ENCODE measurements at regions of chr6 and their contacts with region 1.

Region 1: GRCh38 chr6:125314019-125314581 is 12.3 kb upstream of the HDDC2 start:
- DNase-seq: peak; percentile 54
- H3K4me3 ChIP-seq: no peak overlapping the region; a peak in 1 of 4 replicates
- H3K27ac ChIP-seq: no peak overlapping the region
- H3K4me1 ChIP-seq: peaks cover 0 to 2% of the 10 kb centered on the region in 2 experiments; a peak in 1 of 4 replicates
- H3K27me3 ChIP-seq: peaks cover 20% of the 10 kb centered on the region; the same call in 1 of the 2 replicates
- CTCF ChIP-seq: peak; percentile 84
- EP300 ChIP-seq: no peak
- RAD21 ChIP-seq: peak; percentile 92

Region 2: DNA sequence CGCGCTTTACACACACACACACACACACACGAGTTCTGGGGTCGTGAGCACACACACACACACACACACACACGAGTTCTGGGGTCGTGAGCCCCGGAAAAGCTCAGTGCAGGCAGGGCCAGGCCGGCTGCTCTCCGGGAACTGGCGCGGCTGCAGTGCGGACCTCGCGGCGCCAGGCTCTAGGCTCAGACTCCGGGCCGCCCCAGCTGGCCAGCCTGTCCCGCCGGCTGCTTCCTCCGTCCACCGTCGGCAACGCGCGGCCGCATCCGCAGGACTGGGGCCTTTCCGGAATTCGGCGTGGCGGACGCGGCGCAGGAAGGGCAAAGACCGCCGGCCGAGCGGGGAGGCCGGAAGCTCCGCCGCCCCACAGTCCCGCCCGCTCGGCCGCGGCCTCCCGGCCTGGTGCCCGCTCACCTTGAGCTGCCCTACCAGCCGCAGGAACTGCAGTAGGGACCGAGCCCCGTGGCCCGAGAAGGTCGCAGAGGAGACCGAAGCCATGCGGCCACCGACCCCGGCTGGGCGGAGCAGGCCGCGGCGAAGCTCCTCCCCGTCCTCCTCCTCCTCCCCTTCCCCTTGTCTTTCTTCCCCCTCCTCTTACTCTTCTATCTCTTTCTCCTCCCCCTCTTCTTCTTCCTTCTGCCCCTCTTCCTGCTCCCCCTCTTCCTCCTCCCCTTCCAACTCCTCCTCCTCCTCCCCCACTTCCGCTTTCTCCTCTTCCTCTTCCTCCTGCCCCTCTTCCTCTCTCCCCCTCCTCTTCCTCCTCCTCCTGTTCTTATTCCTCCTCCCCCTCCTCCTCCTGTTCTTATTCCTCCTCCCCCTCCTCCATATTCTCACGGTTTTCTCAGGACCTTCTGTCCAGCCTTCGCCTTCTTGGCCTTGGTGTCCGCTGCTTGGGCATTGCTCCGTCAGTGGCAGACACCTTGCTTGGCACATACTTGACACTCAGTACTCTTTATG is 12.4 kb before region 1 on chr6 and contains the start of gene HDDC2:
- CTCF ChIA-PET with region 1: interaction called, 25 read pairs
- POLR2A ChIA-PET with region 1: no interaction called
- DNase-seq: peak; percentile 89
- H3K4me3 ChIP-seq: peak within 1 kb of the TSS; percentile 60 to 74
- H3K27ac ChIP-seq: peak within 1 kb of the TSS; percentile 56 to 76
- H3K4me1 ChIP-seq: peaks cover 0 to 8% of the 10 kb centered on the region in 2 experiments; a peak in 3 of 4 replicates
- H3K27me3 ChIP-seq: no peaks in the 10 kb centered on the region; the same call in 1 of the 2 replicates
- CTCF ChIP-seq: no peak
- EP300 ChIP-seq: no peak; a peak in 1 of 4 replicates
- RAD21 ChIP-seq: no peak
- polyA plus RNA-seq, gene HDDC2: 80.2 and 85.5 TPM in 2 replicates

Region 3: GRCh38 chr6:125325586-125325985 is 11.5 kb after region 1 on chr6:
- CTCF ChIA-PET with region 1: interaction called, 42 read pairs
- POLR2A ChIA-PET with region 1: no interaction called
- DNase-seq: no peak
- H3K4me3 ChIP-seq: no peak overlapping the region
- H3K27ac ChIP-seq: no peak overlapping the region
- H3K4me1 ChIP-seq: no peaks in the 10 kb centered on the region
- H3K27me3 ChIP-seq: peaks cover 7% of the 10 kb centered on the region; the same call in 1 of the 2 replicates
- CTCF ChIP-seq: no peak
- EP300 ChIP-seq: no peak
- RAD21 ChIP-seq: no peak

Region 4: GRCh38 chr6:125377621-125378020 is 63.5 kb after region 1 on chr6:
- CTCF ChIA-PET with region 1: no interaction called
- POLR2A ChIA-PET with region 1: no interaction called
- DNase-seq: peak; percentile 33
- H3K4me3 ChIP-seq: no peak overlapping the region
- H3K27ac ChIP-seq: no peak overlapping the region
- H3K4me1 ChIP-seq: no peaks in the 10 kb centered on the region
- H3K27me3 ChIP-seq: peaks cover 25% of the 10 kb centered on the region; the same call in 1 of the 2 replicates
- CTCF ChIP-seq: no peak
- EP300 ChIP-seq: no peak
- RAD21 ChIP-seq: no peak

Region 5: GRCh38 chr6:125749173-125749864 is 435.2 kb after region 1 on chr6 and contains the start of gene HEY2:
- CTCF ChIA-PET with region 1: interaction called, 278 read pairs
- POLR2A ChIA-PET with region 1: no interaction called
- DNase-seq: peak; percentile 99
- H3K4me3 ChIP-seq: peak within 1 kb of the TSS; percentile 55 to 61
- H3K27ac ChIP-seq: no peak within 1 kb of the TSS
- H3K4me1 ChIP-seq: peaks cover 0 to 18% of the 10 kb centered on the region in 2 experiments; a peak in 2 of 4 replicates
- H3K27me3 ChIP-seq: peaks cover 67% of the 10 kb centered on the region
- CTCF ChIP-seq: no peak
- EP300 ChIP-seq: no peak
- RAD21 ChIP-seq: no peak
- polyA plus RNA-seq, gene HEY2: not detected in 2 replicates

Region 6: DNA sequence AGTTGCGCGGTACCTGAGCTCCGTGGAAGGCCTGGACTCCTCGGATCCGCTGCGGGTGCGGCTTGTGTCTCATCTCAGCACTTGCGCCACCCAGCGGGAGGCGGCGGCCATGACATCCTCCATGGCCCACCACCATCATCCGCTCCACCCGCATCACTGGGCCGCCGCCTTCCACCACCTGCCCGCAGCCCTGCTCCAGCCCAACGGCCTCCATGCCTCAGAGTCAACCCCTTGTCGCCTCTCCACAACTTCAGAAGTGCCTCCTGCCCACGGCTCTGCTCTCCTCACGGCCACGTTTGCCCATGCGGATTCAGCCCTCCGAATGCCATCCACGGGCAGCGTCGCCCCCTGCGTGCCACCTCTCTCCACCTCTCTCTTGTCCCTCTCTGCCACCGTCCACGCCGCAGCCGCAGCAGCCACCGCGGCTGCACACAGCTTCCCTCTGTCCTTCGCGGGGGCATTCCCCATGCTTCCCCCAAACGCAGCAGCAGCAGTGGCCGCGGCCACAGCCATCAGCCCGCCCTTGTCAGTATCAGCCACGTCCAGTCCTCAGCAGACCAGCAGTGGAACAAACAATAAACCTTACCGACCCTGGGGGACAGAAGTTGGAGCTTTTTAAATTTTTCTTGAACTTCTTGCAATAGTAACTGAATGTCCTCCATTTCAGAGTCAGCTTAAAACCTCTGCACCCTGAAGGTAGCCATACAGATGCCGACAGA is 445.2 kb after region 1 on chr6:
- CTCF ChIA-PET with region 1: interaction called, 278 read pairs
- POLR2A ChIA-PET with region 1: no interaction called
- DNase-seq: peak; percentile 87
- H3K4me3 ChIP-seq: peak overlapping the region; percentile 27 to 37
- H3K27ac ChIP-seq: no peak overlapping the region
- H3K4me1 ChIP-seq: peaks cover 0 to 8% of the 10 kb centered on the region in 2 experiments; a peak in 1 of 4 replicates
- H3K27me3 ChIP-seq: peaks cover 68% of the 10 kb centered on the region
- CTCF ChIP-seq: peak; percentile 73
- EP300 ChIP-seq: no peak
- RAD21 ChIP-seq: peak; percentile 51

Region 7: DNA sequence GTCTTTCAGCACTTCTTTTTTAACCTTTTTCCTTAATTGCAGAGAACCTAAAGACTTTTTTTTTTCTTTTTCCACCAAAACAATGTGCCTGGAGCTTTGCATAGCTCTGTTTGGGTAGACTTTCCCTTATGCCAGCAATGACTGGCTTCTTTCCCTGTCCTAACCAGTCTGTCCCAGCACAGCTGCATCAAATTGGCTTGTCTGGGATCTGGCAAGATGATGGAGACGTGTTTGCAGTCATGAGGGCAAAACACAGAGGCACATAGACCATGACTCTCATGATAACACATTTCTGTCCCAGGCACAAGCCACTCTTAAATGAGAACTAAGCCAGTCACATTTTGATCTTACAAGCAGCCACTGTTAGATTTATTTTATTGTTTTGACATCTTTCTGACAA is 451.8 kb after region 1 on chr6:
- CTCF ChIA-PET with region 1: interaction called, 278 read pairs
- POLR2A ChIA-PET with region 1: no interaction called
- DNase-seq: no peak
- H3K4me3 ChIP-seq: no peak overlapping the region
- H3K27ac ChIP-seq: no peak overlapping the region
- H3K4me1 ChIP-seq: no peaks in the 10 kb centered on the region
- H3K27me3 ChIP-seq: peaks cover 43% of the 10 kb centered on the region
- CTCF ChIP-seq: no peak
- EP300 ChIP-seq: no peak
- RAD21 ChIP-seq: no peak

Region 8: GRCh38 chr6:125974214-125974866 is 660.2 kb after region 1 on chr6:
- CTCF ChIA-PET with region 1: interaction called, 15 read pairs
- POLR2A ChIA-PET with region 1: no interaction called
- DNase-seq: peak; percentile 34
- H3K4me3 ChIP-seq: no peak overlapping the region
- H3K27ac ChIP-seq: no peak overlapping the region
- H3K4me1 ChIP-seq: no peaks in the 10 kb centered on the region
- H3K27me3 ChIP-seq: no peaks in the 10 kb centered on the region
- CTCF ChIP-seq: peak; percentile 74
- EP300 ChIP-seq: no peak
- RAD21 ChIP-seq: peak; percentile 80